ENCODE measurements at regions of chr17 and their contacts with region 1.

Region 1: DNA sequence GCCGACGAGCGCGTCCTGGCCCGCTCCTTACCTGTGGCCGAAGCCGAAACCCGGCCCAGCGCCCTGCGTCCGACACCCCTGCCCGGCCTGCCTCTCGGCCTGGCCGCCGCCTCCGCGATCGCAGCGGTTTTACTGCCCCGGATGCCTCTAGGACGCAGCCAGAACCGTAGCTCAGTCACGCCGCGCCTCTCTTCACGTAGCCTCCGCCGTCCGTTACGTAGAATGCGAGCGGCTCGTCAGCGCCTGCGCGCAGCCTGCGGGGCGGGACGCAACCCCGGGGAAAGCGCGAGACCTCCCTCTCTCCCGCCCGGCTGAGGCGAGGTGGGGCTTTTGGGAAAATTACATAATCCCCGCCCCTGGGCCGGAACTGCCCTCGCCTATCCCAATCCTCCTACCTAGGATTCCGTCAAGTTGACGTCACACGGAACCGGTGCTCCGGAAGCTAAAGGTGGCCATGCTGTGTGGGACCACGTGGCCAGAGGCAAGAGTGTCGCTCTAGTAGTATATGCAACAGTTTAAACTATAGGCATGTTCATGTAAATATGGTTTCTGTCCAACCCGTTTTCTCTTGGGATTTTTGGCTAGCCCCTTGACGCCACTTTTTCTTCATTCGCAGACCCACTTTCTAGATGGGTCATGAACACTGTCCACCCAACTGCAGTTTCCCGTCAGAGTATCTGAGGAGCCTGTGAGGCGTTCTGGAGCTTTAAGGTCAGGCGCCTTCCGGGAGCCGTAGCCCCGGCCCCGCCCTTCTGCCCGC is at the start of gene CCDC47:
- DNase-seq: peak; percentile 94 to 99 (median 98)
- ATAC-seq: peak; percentile 86 to 88
- H3K4me3 Mint-ChIP-seq: peak within 1 kb of the TSS; percentile 87 to 99 (median 96)
- H3K27ac Mint-ChIP-seq: peak within 1 kb of the TSS; percentile 91 to 100 (median 99)
- H3K4me1 Mint-ChIP-seq: peaks cover 30 to 80% (median 70%) of the 10 kb centered on the region in 4 donors
- H3K27me3 Mint-ChIP-seq: no peaks in the 10 kb centered on the region
- polyA plus RNA-seq, gene CCDC47: 21.8 to 34.8 (median 26.0) TPM

Region 2: DNA sequence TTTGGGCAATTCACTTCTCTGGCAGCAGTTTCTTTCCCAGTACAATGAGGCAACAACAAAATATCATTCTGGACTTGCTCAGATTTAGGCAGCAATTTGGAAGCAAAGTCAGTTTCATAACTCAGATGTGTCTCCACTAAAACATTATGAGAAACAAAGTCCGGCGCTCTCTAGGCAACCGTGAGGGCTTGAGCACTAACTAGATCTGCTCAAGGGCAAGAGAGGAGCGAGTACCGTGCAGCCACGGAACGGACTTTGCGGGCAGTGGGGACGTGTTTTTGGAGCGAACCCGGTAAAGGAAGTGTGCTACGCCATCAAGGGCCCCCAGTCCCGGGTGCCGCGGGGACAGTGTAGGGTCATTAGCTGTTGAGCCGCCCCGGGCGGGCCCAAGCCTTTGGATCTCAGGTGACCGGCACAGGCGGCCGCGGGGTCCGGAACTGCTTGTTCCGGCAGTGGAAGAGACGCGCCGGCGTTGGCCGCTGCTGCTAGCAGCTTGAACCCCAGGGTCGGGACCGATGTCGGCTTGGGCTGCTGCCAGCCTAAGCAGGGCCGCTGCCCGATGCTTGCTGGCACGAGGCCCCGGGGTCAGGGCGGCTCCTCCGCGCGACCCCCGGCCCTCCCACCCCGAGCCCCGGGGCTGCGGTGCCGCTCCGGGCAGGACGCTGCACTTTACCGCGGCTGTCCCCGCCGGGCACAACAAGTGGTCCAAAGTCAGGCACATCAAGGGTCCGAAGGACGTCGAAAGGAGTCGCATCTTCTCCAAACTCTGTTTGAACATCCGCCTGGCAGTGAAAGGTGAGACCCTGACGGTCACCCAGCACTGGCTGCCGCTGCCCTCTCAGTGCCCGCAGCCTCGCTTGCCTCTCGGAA is 172.8 kb before region 1 on chr17 and contains the start of gene TACO1:
- POLR2A ChIA-PET with region 1: no interaction called
- DNase-seq: peak; percentile 47 to 83 (median 70)
- ATAC-seq: peak; percentile 92 to 96
- H3K4me3 Mint-ChIP-seq: peak within 1 kb of the TSS; percentile 87 to 96 (median 94)
- H3K27ac Mint-ChIP-seq: peak within 1 kb of the TSS; percentile 93 to 97 (median 96)
- H3K4me1 Mint-ChIP-seq: peaks cover 13 to 40% (median 28%) of the 10 kb centered on the region in 4 donors
- H3K27me3 Mint-ChIP-seq: no peaks in the 10 kb centered on the region
- polyA plus RNA-seq, gene TACO1: 11.3 to 18.3 (median 17.5) TPM

Region 3: DNA sequence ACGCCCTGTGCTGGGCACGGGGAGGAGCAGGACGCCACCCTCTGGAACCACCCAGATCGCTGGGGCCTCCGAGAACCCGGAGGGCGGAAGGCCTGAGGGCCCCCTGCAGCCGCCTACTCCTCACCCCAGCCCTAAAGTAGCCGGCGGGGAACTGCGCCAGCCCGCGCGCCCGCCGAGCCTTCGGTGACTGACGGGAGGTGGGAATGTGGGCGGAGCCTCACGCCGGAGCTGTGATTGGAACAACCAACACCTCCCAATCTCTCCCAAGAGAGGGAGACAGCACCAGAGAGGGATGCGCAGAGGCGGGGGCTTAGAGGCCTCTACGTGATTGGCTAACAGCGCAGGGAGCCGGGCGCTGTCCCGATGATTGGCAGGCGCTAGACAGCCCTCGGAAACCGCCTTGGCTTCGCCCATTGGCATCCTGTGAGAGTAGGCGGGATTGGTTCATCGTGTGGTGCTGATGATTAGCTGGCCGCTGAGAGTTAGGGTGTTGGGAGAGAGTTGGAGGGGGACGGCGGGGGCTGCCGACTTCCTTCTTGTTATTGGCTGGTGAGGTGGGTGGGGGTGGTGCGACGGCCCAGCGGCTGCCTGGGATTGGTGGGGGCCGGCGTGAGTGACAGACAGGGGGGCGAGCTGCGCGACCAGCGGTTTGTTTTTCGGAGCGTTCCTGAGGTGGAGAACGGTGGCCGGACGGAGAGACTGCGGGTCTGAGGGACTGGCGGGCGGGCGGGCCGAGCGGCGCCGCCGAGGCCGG is 151.6 kb before region 1 on chr17 and contains the start of gene MAP3K3:
- POLR2A ChIA-PET with region 1: interaction called, 12 read pairs
- DNase-seq: peak; percentile 86 to 99 (median 98)
- ATAC-seq: peak; percentile 88 to 93
- H3K4me3 Mint-ChIP-seq: peak within 1 kb of the TSS; percentile 94 to 99 (median 97)
- H3K27ac Mint-ChIP-seq: peak within 1 kb of the TSS; percentile 87 to 96 (median 94)
- H3K4me1 Mint-ChIP-seq: peaks cover 16 to 51% (median 43%) of the 10 kb centered on the region in 4 donors
- H3K27me3 Mint-ChIP-seq: no peaks in the 10 kb centered on the region
- polyA plus RNA-seq, gene MAP3K3: 23.8 to 47.4 (median 24.7) TPM

Region 4: DNA sequence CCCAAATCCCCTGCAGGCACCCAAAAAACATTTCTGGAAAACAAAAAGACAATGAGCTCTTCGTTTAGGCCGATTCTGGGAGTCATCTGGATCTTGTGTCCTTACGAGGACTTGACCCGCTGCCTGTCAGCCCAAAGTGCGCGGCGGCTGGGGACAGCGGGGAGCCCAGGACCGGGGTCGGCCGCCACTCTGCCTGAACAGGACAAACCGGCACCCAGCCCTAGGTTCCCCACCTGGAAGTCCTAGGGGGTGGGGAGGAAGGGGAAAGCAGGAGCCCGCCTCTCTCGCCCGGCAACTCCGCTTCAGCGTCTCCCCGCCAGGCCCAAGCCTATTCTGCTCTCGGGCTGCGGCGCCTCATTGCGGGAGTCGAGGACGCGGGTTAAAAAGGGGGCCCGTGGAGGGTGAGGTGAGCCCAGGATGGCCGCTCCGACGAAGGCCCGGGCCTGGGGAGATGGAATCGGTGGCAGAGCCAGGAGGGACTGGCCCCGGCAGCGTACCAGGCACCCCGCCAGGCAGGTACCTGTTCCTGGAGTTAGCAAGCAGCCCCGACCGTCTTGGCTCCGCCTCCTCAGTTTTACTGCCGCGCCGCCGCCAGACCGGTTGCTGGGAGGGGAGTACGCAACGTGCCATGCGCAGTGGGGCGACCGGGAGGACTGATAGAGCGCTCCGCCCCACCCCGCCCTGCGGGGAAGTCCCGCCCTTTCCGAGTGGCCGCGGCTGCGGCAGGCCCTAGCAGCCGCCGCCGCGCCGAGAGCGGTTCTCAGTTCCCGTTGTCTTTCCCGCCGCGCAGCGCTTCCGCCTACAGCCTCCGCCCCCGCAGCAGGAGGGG is 32.1 kb before region 1 on chr17 and contains the start of gene STRADA:
- POLR2A ChIA-PET with region 1: interaction called, 53 read pairs
- DNase-seq: peak; percentile 93 to 99 (median 98)
- ATAC-seq: peak; percentile 83 to 88
- H3K4me3 Mint-ChIP-seq: peak within 1 kb of the TSS; percentile 86 to 98 (median 93)
- H3K27ac Mint-ChIP-seq: peak within 1 kb of the TSS; percentile 91 to 98 (median 96)
- H3K4me1 Mint-ChIP-seq: peaks cover 15 to 28% (median 19%) of the 10 kb centered on the region in 4 donors
- H3K27me3 Mint-ChIP-seq: no peaks in the 10 kb centered on the region
- polyA plus RNA-seq, gene STRADA: 17.8 to 24.5 (median 23.6) TPM

Region 5: GRCh38 chr17:63827002-63827771 is 53.6 kb after region 1 on chr17 and contains the starts of genes FTSJ3 and PSMC5:
- POLR2A ChIA-PET with region 1: interaction called, 32 read pairs
- DNase-seq: peak; percentile 90 to 98 (median 94)
- ATAC-seq: peak; percentile 91 to 93
- H3K4me3 Mint-ChIP-seq: peak within 1 kb of the TSS; percentile 92 to 100 (median 98)
- H3K27ac Mint-ChIP-seq: peak within 1 kb of the TSS; percentile 97 to 100 (median 99)
- H3K4me1 Mint-ChIP-seq: peaks cover 40 to 83% (median 81%) of the 10 kb centered on the region in 4 donors
- H3K27me3 Mint-ChIP-seq: no peaks in the 10 kb centered on the region
- polyA plus RNA-seq, gene FTSJ3: 16.8 to 43.1 (median 24.0) TPM
- polyA plus RNA-seq, gene PSMC5: 173 to 214 (median 191) TPM

Region 6: DNA sequence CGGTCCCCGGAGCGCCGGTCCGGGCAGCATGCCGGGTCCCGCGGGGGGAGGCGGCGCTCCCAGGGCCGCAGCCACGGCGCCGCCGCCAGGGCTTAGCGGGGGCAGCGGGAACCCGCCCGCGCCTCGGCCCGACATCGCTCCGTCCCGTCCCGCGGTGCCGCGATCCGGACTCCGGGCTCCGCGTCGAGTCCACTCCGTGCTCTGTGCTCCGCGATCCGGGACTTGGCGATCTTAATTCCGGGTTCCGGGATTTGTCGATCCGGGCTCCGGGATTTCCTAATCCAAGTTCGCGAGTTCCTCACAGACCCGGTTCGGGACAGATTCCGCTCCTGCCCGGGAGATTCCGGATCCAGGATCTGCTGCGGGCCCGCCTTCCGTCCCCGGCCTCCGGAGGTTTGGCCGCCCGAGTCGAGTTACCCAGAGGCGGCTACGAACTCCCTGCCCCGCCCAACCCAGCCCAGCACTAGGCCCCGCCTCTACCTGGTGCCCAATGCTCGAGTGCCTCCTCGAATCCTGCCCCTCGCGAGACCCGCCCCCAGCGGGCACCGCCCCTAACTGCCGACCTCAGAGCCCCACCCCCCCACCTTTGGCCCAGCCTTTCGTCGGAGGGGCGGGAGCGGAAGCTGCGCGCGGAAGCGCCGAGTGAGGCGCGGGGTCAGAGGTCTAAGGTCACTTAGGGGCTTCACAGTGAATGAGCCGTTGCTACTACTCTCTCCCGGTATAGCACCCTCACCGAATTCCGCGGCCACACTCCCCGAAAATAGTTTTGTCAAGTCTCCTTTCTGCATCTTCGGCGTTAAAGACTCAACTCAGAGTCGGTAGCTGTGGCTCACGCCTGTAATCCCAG is 69.2 kb after region 1 on chr17 and contains the start of gene SMARCD2:
- POLR2A ChIA-PET with region 1: interaction called, 29 read pairs
- DNase-seq: peak; percentile 94 to 99 (median 98)
- ATAC-seq: peak; percentile 86 to 88
- H3K4me3 Mint-ChIP-seq: peak within 1 kb of the TSS; percentile 90 to 98 (median 94)
- H3K27ac Mint-ChIP-seq: peak within 1 kb of the TSS; percentile 90 to 97 (median 94)
- H3K4me1 Mint-ChIP-seq: peaks cover 24 to 52% (median 52%) of the 10 kb centered on the region in 4 donors
- H3K27me3 Mint-ChIP-seq: no peaks in the 10 kb centered on the region
- polyA plus RNA-seq, gene SMARCD2: 65.9 to 112 (median 91.5) TPM